ENCODE measurements at regions of chr15 and their contacts with region 1.

Region 1: GRCh38 chr15:41811432-41812195 is 16.3 kb upstream of the JMJD7 start:
- DNase-seq: peak; percentile 85
- H3K4me3 Mint-ChIP-seq: no peak overlapping the region
- H3K27ac Mint-ChIP-seq: no peak overlapping the region
- H3K4me1 Mint-ChIP-seq: peaks cover 6% of the 10 kb centered on the region
- H3K27me3 Mint-ChIP-seq: no peaks in the 10 kb centered on the region

Region 2: GRCh38 chr15:41603941-41604911 is 207.4 kb before region 1 on chr15:
- CTCF ChIA-PET with region 1: interaction called, 18 read pairs
- intact Hi-C with region 1: loop called (anchors 1 kb)
- DNase-seq: peak; percentile 72
- H3K4me3 Mint-ChIP-seq: peak overlapping the region; percentile 69
- H3K27ac Mint-ChIP-seq: no peak overlapping the region
- H3K4me1 Mint-ChIP-seq: peaks cover 11% of the 10 kb centered on the region
- H3K27me3 Mint-ChIP-seq: peaks cover 2% of the 10 kb centered on the region

Region 3: DNA sequence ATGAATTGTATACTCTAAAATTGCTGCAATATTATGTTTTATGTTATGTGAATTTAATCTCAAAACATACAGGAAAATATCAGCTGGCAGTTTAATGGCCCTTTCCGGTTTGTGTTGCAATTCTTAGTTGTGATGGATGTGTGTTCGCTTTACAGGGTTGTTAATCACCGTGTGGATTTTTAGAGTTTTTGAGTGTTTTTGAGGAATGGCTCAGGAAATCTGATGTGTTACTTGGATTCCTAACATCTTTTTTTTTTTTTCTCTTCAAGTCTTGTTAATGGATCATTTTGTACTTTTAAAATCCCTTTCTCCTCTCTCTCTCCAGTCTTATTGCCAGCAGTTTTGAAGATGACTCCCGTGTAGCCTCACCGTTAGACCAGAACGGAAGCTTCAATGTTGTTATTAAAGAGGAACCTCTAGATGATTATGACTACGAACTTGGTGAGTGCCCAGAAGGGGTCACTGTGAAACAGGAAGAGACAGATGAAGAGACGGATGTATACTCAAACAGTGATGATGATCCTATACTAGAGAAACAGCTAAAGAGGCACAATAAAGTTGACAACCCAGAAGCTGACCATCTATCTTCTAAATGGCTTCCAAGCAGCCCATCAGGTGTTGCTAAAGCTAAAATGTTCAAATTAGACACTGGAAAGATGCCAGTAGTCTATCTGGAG is 115.7 kb before region 1 on chr15:
- CTCF ChIA-PET with region 1: interaction called, 4 read pairs
- intact Hi-C with region 1: loop called (anchors 1 kb)
- DNase-seq: peak; percentile 78
- H3K4me3 Mint-ChIP-seq: peak overlapping the region; percentile 22
- H3K27ac Mint-ChIP-seq: peak overlapping the region; percentile 76
- H3K4me1 Mint-ChIP-seq: peaks cover 48% of the 10 kb centered on the region
- H3K27me3 Mint-ChIP-seq: no peaks in the 10 kb centered on the region

Region 4: GRCh38 chr15:41790756-41791546 is 20.7 kb before region 1 on chr15:
- CTCF ChIA-PET with region 1: interaction called, 32 read pairs
- intact Hi-C with region 1: no loop called
- DNase-seq: no peak
- H3K4me3 Mint-ChIP-seq: no peak overlapping the region
- H3K27ac Mint-ChIP-seq: no peak overlapping the region
- H3K4me1 Mint-ChIP-seq: peaks cover 39% of the 10 kb centered on the region
- H3K27me3 Mint-ChIP-seq: no peaks in the 10 kb centered on the region

Region 5: GRCh38 chr15:41838400-41838897 is 26.8 kb after region 1 on chr15 and contains the start of gene PLA2G4B:
- CTCF ChIA-PET with region 1: interaction called, 10 read pairs
- intact Hi-C with region 1: no loop called
- DNase-seq: no peak
- H3K4me3 Mint-ChIP-seq: no peak within 1 kb of the TSS
- H3K27ac Mint-ChIP-seq: no peak within 1 kb of the TSS
- H3K4me1 Mint-ChIP-seq: peaks cover 5% of the 10 kb centered on the region
- H3K27me3 Mint-ChIP-seq: no peaks in the 10 kb centered on the region
- total RNA-seq, gene PLA2G4B: 9.0 to 9.7 TPM